CD8-positive, alpha-beta T cell (primary cell): ENCODE measurements at regions of chr9 and their contacts with region 1.

Region 1: GRCh38 chr9:130866474-130866965 is 30.1 kb downstream of the QRFP start:
- DNase-seq: peak; percentile 6 to 65 (median 51)
- ATAC-seq: peak; percentile 44
- H3K4me3 ChIP-seq: no peak overlapping the region
- H3K4me3 Mint-ChIP-seq: no peak overlapping the region
- H3K27ac ChIP-seq: no peak overlapping the region
- H3K27ac Mint-ChIP-seq: no peak overlapping the region
- H3K4me1 ChIP-seq: no peaks in the 10 kb centered on the region
- H3K4me1 Mint-ChIP-seq: peaks cover 3% of the 10 kb centered on the region
- H3K27me3 ChIP-seq: no peaks in the 10 kb centered on the region
- H3K27me3 Mint-ChIP-seq: no peaks in the 10 kb centered on the region
- CTCF ChIP-seq: peak; percentile 76

Region 2: DNA sequence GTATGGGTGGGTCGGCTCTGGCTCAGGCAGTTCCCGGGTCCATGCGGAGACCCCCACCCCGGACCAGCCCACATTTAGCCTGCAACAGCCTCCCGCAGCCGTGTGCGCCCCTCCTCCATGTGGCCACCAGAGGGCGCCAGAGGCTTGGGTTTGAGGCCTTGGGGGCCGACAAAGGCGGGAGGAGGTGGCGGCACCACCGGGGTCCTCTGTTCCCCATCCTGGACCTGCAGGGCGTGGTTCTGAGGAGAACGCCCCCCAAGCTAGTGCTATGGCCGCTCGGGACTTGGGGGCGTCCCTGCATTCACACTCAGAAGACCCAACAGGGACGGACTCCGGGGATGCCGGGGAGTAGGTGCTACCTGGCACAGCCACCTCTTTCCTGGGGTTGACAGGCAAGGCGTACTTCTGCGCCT is 405.3 kb before region 1 on chr9:
- CTCF ChIA-PET with region 1: interaction called, 4 read pairs
- POLR2A ChIA-PET with region 1: no interaction called
- intact Hi-C with region 1: loop called in 1 of 2 experiments (anchors 1 kb)
- DNase-seq: peak; percentile 48 to 86 (median 71)
- ATAC-seq: peak; percentile 65
- H3K4me3 ChIP-seq: no peak overlapping the region
- H3K4me3 Mint-ChIP-seq: no peak overlapping the region
- H3K27ac ChIP-seq: no peak overlapping the region
- H3K27ac Mint-ChIP-seq: no peak overlapping the region
- H3K4me1 ChIP-seq: no peaks in the 10 kb centered on the region
- H3K4me1 Mint-ChIP-seq: no peaks in the 10 kb centered on the region
- H3K27me3 ChIP-seq: no peaks in the 10 kb centered on the region
- H3K27me3 Mint-ChIP-seq: peaks cover 24% of the 10 kb centered on the region
- CTCF ChIP-seq: peak; percentile 82

Region 3: GRCh38 chr9:130707225-130707976 is 159.1 kb before region 1 on chr9:
- CTCF ChIA-PET with region 1: interaction called, 87 read pairs
- POLR2A ChIA-PET with region 1: no interaction called
- intact Hi-C with region 1: loop called (anchors 1 kb)
- DNase-seq: peak; percentile 18 to 83 (median 77)
- ATAC-seq: peak; percentile 48
- H3K4me3 ChIP-seq: no peak overlapping the region
- H3K4me3 Mint-ChIP-seq: no peak overlapping the region
- H3K27ac ChIP-seq: no peak overlapping the region
- H3K27ac Mint-ChIP-seq: no peak overlapping the region
- H3K4me1 ChIP-seq: no peaks in the 10 kb centered on the region
- H3K4me1 Mint-ChIP-seq: peaks cover 3% of the 10 kb centered on the region
- H3K27me3 ChIP-seq: no peaks in the 10 kb centered on the region
- H3K27me3 Mint-ChIP-seq: no peaks in the 10 kb centered on the region
- CTCF ChIP-seq: peak; percentile 93

Region 4: GRCh38 chr9:130782886-130783530 is 83.5 kb before region 1 on chr9:
- CTCF ChIA-PET with region 1: no interaction called
- POLR2A ChIA-PET with region 1: no interaction called
- intact Hi-C with region 1: no loop called
- DNase-seq: no peak
- ATAC-seq: no peak
- H3K4me3 ChIP-seq: no peak overlapping the region
- H3K4me3 Mint-ChIP-seq: no peak overlapping the region
- H3K27ac ChIP-seq: no peak overlapping the region
- H3K27ac Mint-ChIP-seq: no peak overlapping the region
- H3K4me1 ChIP-seq: no peaks in the 10 kb centered on the region
- H3K4me1 Mint-ChIP-seq: peaks cover 16% of the 10 kb centered on the region
- H3K27me3 ChIP-seq: no peaks in the 10 kb centered on the region
- H3K27me3 Mint-ChIP-seq: no peaks in the 10 kb centered on the region
- CTCF ChIP-seq: no peak

Region 5: GRCh38 chr9:130834371-130835311 is 31.9 kb before region 1 on chr9 and contains the start of gene ABL1:
- CTCF ChIA-PET with region 1: interaction called, 3 read pairs
- POLR2A ChIA-PET with region 1: no interaction called
- intact Hi-C with region 1: loop called in 1 of 2 experiments (anchors 2 kb)
- DNase-seq: peak; percentile 42 to 91 (median 65)
- ATAC-seq: peak; percentile 86
- H3K4me3 ChIP-seq: peak within 1 kb of the TSS; percentile 65
- H3K4me3 Mint-ChIP-seq: peak within 1 kb of the TSS; percentile 97
- H3K27ac ChIP-seq: peak within 1 kb of the TSS; percentile 44 to 58
- H3K27ac Mint-ChIP-seq: peak within 1 kb of the TSS; percentile 92
- H3K4me1 ChIP-seq: peaks cover 14% of the 10 kb centered on the region
- H3K4me1 Mint-ChIP-seq: peaks cover 47% of the 10 kb centered on the region
- H3K27me3 ChIP-seq: no peaks in the 10 kb centered on the region
- H3K27me3 Mint-ChIP-seq: no peaks in the 10 kb centered on the region
- CTCF ChIP-seq: no peak
- total RNA-seq, gene ABL1: 37.5 to 38.0 TPM

Region 6: DNA sequence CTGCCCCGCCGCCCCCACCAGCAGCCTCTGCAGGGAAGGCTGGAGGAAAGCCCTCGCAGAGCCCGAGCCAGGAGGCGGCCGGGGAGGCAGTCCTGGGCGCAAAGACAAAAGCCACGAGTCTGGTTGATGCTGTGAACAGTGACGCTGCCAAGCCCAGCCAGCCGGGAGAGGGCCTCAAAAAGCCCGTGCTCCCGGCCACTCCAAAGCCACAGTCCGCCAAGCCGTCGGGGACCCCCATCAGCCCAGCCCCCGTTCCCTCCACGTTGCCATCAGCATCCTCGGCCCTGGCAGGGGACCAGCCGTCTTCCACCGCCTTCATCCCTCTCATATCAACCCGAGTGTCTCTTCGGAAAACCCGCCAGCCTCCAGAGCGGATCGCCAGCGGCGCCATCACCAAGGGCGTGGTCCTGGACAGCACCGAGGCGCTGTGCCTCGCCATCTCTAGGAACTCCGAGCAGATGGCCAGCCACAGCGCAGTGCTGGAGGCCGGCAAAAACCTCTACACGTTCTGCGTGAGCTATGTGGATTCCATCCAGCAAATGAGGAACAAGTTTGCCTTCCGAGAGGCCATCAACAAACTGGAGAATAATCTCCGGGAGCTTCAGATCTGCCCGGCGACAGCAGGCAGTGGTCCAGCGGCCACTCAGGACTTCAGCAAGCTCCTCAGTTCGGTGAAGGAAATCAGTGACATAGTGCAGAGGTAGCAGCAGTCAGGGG is 18.6 kb after region 1 on chr9:
- CTCF ChIA-PET with region 1: interaction called, 17 read pairs
- POLR2A ChIA-PET with region 1: no interaction called
- intact Hi-C with region 1: no loop called
- DNase-seq: no peak
- ATAC-seq: no peak
- H3K4me3 ChIP-seq: no peak overlapping the region
- H3K4me3 Mint-ChIP-seq: no peak overlapping the region
- H3K27ac ChIP-seq: no peak overlapping the region
- H3K27ac Mint-ChIP-seq: no peak overlapping the region
- H3K4me1 ChIP-seq: no peaks in the 10 kb centered on the region
- H3K4me1 Mint-ChIP-seq: no peaks in the 10 kb centered on the region
- H3K27me3 ChIP-seq: no peaks in the 10 kb centered on the region
- H3K27me3 Mint-ChIP-seq: no peaks in the 10 kb centered on the region
- CTCF ChIP-seq: no peak

Region 7: DNA sequence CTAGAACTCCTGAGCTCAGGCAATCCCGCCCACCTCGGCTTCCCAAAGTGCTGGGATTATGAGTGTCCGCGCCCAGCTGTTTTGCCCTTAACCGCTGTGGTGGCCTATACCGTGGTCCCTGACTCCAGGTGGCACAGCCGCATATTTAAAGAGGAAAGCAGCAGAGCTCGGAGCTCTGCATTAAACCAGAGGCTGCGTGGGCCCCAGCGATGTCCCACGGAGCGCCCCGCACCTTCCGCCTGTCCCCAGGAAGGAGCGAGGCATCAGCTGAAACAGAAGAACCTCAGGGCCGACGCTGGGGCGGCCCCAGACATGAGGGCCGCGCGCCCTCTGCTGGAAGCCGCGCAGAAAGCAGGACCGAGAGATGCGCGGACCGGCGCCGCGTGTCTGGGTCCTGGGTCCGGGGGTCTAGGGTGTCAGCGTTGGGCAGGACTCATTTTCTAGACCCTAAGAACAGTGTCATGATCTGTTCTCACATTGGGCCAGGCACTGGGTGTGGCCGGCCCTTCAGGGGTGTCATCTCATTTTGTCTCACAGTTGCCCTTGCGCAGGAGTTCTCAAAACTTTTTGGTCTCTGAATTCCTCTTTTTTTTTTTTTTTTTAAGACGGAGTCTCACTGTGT is 180.2 kb after region 1 on chr9:
- CTCF ChIA-PET with region 1: interaction called, 27 read pairs
- POLR2A ChIA-PET with region 1: no interaction called
- intact Hi-C with region 1: loop called (anchors 1 kb)
- DNase-seq: peak; percentile 51 to 80 (median 70)
- ATAC-seq: peak; percentile 91
- H3K4me3 ChIP-seq: no peak overlapping the region
- H3K4me3 Mint-ChIP-seq: no peak overlapping the region
- H3K27ac ChIP-seq: no peak overlapping the region
- H3K27ac Mint-ChIP-seq: no peak overlapping the region
- H3K4me1 ChIP-seq: peaks cover 11% of the 10 kb centered on the region
- H3K4me1 Mint-ChIP-seq: peaks cover 15% of the 10 kb centered on the region
- H3K27me3 ChIP-seq: peaks cover 0 to 3% of the 10 kb centered on the region in 2 experiments
- H3K27me3 Mint-ChIP-seq: peaks cover 9% of the 10 kb centered on the region
- CTCF ChIP-seq: peak; percentile 94